Transverse colon (tissue), 4 donors: ENCODE measurements at regions of chr19 and their contacts with region 1.

Region 1: DNA sequence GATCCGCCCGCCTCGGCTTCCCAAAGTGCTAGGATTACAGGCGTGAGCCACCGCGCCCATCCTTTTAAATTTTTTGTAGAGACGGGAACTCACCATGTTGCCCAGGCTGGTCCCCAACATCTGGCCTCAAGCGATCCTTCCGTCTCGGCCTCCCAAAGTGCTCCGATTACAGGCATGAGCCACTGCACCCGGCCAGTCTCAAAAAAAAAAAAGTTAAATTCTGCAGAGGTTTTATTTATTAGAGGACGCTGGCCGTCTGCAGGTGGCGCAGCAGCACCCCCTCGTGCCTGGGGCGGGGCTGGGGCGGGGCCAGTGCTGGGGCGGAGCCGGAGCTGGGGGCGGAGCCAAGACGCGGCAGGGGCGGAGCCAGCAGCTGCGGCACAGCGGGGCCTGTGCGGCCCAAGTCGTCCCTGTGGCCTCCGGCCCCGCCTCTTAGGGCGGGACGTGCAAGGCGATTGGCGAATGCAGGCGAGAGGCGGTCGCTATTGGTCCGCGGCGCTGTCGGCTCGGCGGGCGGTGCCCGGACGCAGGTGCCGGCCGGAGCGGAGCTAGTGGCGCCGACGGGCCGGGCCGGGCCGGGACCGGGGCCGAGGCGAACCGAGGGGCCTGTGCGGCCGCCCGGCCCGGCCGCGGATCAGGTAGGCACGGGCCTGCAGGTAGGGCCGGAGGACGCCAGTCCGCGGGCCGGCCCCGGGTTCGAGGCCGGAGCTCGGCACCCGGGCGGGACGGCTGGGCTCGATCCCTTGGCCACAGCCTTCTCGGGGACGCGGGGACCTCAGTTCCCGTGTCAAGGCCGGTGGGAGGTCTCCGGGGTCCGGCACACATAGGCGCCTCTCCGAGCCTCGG is at the start of gene MARCHF2:
- DNase-seq: peak; percentile 97
- H3K4me3 ChIP-seq: peak within 1 kb of the TSS; percentile 86 to 95 (median 92)
- H3K27ac ChIP-seq: peak within 1 kb of the TSS; percentile 82 to 90 (median 83)
- H3K4me1 ChIP-seq: peaks cover 6 to 49% (median 15%) of the 10 kb centered on the region in 4 donors
- H3K27me3 ChIP-seq: no peaks in the 10 kb centered on the region
- CTCF ChIP-seq: peak; percentile 53 to 74 (median 61)
- EP300 ChIP-seq: no peak
- POLR2A ChIP-seq: no peak
- total RNA-seq, gene MARCHF2: 86.1 to 381 (median 118) TPM

Region 2: DNA sequence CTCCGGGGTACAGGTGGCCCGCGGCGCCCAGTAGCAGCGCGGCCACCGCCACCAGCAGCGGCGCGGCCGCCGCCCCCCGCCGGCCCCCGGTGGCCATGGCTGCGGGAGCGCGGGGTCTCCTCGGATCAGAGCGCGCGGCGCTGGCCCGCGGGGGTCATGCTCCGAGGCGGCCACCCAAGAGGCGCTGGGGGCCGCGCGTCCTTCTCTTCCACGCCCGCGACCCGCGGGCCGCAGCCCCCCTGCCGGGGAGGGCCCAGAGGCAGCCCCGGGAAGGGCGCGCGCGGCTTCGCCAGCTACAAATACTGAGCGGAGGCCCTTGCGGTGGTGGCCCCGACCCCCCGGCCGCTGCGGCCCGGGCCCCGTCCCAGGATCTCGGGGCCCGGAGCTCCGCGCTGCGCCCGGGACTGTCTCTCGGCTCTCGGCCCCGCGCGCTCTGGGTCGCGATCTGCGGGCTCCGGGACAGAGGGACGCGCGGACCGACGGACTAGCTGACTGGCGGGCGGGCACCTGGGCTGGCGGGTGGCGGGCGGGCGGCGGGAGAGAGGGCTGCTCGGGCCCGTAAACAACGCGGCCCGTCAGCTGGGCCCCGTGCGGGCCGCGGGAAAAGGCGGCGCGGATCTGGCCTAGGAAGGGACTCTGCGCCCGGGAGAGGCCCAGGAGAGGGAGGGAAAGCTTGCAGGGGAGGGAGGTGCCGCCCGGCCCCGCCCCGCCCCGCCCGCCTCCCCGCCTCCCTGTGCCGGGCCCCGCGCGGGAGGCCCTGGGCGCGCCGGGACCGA is 1119.0 kb before region 1 on chr19 and contains the start of gene INSR:
- in situ Hi-C with region 1: no loop called
- intact Hi-C with region 1: no loop called
- DNase-seq: peak; percentile 93
- H3K4me3 ChIP-seq: peak within 1 kb of the TSS; percentile 74 to 100 (median 100)
- H3K27ac ChIP-seq: peak within 1 kb of the TSS; percentile 86 to 98 (median 94)
- H3K4me1 ChIP-seq: peaks cover 7 to 34% (median 24%) of the 10 kb centered on the region in 4 donors
- H3K27me3 ChIP-seq: no peaks in the 10 kb centered on the region
- CTCF ChIP-seq: no peak
- EP300 ChIP-seq: no peak
- POLR2A ChIP-seq: peak; percentile 67
- total RNA-seq, gene INSR: 134 to 252 (median 164) TPM

Region 3: DNA sequence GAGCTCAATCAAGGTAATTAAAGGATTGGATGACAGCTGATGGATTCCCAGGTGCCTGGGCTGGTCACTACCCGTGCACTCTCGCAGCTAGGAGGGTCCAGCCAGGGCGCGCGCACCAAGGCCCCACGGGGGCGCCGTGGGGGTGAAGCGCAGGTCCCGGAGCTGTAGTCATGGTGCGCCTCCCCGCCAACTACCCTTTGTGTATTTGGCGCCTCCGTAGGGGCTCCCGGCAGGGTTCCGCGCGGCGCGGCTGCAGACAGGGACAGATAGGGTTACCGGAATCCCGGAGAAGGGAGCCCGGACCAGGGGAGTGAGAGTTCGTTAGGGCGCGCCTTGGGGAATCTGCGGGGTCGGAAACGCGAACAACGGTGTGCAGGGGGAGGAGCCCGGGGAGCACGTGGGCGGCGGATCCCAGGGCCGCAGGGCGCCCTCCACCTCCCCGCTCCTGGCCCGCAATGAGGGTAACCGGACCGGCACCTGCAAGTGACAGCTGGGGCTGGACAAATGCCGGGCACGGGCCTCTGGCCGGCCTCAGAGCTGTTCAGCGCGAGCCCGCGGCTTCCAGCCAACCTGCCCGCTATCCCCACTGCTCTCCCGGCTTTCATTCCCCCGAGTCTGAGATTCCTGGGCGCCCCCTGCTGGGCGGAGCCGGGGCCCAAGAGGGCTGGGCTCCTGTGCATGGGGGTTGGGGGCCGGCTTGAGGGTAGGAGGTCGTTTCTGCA is 92.8 kb after region 1 on chr19:
- in situ Hi-C with region 1: loop called in 2 of 4 experiments (anchors 10 to 25 kb)
- intact Hi-C with region 1: no loop called
- DNase-seq: peak; percentile 82
- H3K4me3 ChIP-seq: peak overlapping the region; percentile 10 to 59 (median 36)
- H3K27ac ChIP-seq: peak overlapping the region in 2 of 4 donors; percentile 2 to 8
- H3K4me1 ChIP-seq: peaks cover 5 to 13% (median 12%) of the 10 kb centered on the region in 4 donors
- H3K27me3 ChIP-seq: no peaks in the 10 kb centered on the region
- CTCF ChIP-seq: peak; percentile 81 to 88 (median 83)
- EP300 ChIP-seq: no peak
- POLR2A ChIP-seq: no peak

Region 4: DNA sequence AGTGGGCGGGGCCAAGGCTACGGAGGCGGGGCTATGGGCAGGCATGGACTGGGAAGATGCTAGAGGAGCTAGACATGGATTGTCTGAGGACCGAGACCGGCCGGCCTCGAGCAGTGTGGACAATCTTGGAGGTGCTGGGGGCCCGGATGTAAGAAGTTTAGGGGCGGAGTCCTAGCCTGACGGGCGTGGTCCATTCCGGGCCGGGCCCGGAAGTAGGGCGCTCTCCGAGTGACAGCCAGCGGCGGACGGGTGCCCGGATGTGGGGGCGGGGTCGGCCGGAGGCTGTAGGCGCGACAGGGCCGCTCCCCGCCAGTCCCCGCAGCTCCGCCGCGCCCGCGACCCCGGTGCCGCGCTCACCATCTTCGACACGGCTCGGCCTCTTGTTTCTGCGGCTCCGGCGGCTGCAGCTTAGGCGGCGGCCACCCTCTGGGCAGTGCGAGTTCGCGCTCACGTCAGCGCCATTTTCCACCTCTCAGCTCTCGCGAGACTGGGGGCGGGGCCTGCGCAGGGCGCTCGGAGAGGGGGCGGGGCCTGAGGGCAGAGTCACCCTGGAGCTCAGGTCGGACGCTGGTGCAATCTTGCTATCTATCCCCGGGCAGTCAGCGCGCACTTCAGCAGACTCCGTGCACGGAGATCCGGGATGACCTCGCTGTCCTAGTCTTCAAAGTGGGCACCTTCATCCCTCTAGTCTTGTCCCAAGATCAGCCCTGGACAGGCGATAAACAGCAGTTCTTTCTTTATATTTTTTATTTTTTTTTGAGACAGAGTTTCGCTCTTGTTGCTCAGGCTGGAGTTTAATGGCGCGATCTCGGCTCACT is 100.9 kb after region 1 on chr19 and contains the start of gene ZNF414:
- in situ Hi-C with region 1: loop called in 2 of 4 experiments (anchors 10 to 25 kb)
- intact Hi-C with region 1: no loop called
- DNase-seq: peak; percentile 98
- H3K4me3 ChIP-seq: peak within 1 kb of the TSS; percentile 41 to 85 (median 73)
- H3K27ac ChIP-seq: peak within 1 kb of the TSS; percentile 94 to 99 (median 96)
- H3K4me1 ChIP-seq: peaks cover 10 to 26% (median 22%) of the 10 kb centered on the region in 4 donors
- H3K27me3 ChIP-seq: no peaks in the 10 kb centered on the region
- CTCF ChIP-seq: no peak
- EP300 ChIP-seq: no peak
- POLR2A ChIP-seq: peak; percentile 95
- total RNA-seq, gene ZNF414: 7.8 to 13.8 (median 11.0) TPM

Region 5: GRCh38 chr19:9115307-9115813 is 702.4 kb after region 1 on chr19 and contains the start of gene OR7G1:
- in situ Hi-C with region 1: no loop called
- intact Hi-C with region 1: no loop called
- DNase-seq: no peak
- H3K4me3 ChIP-seq: no peak within 1 kb of the TSS
- H3K27ac ChIP-seq: no peak within 1 kb of the TSS
- H3K4me1 ChIP-seq: no peaks in the 10 kb centered on the region
- H3K27me3 ChIP-seq: peaks cover 4% of the 10 kb centered on the region
- CTCF ChIP-seq: no peak
- EP300 ChIP-seq: no peak
- POLR2A ChIP-seq: no peak
- total RNA-seq, gene OR7G1: not detected